ENCODE measurements at regions of chr21 and their contacts with region 1.

Region 1: GRCh38 chr21:44991538-44992483 is 52.0 kb downstream of the SLX9 start:
- DNase-seq: peak; percentile 79
- H3K4me3 ChIP-seq: 0 out of 2 replicates have a peak overlapping the region, but pooled peaks have one; percentile 17
- H3K27ac ChIP-seq: peak overlapping the region; percentile 21
- H3K27me3 ChIP-seq: peaks cover 48% of the 10 kb centered on the region
- CTCF ChIP-seq: peak; percentile 56

Region 2: DNA sequence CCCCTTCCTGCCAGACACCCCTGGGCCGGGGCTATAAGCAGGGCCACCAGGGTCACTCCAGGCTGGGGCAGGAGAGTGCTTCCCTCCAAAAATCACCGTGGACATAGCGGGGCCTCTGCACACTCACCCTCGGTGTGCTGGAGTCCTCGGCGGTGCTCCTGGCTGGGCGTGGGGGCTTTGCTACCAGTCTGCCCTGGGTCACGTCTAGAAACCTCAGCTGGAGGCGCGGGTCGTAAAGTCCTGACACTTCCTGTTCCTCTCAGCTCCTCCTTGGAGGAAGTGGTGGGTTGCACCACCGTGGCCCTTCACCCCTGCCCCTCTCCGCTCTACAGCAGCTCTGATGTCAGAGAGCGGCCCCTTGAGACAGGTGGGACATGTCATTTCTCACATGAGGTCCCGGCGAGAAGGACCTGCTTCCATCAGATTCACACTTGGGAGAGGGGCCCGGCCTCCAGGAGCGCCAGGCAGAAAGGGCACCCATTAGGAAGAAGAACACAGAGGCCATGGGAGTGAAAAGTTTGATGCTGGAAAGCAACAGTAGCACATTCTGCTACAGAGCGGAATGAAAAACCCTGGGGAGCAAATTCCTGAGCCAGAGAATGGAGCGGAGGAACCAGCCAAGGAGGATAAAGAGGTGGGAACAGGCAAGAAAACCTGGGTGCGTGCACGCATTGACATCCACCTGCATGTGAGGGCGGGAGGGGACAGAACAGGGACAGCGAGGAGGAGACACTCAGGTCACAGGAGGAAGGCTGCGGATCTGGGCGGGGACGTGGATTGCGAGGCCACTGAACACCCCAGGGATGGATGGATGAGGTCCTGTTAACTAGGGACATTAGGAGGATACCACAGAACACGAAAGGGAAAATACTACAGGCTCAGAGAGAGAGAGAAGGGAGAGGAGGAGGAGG is 70.9 kb before region 1 on chr21 and contains the start of gene ITGB2:
- CTCF ChIA-PET with region 1: no interaction called
- POLR2A ChIA-PET with region 1: no interaction called
- DNase-seq: no peak
- H3K4me3 ChIP-seq: no peak within 1 kb of the TSS
- H3K27ac ChIP-seq: no peak within 1 kb of the TSS
- H3K27me3 ChIP-seq: peaks cover 73% of the 10 kb centered on the region
- CTCF ChIP-seq: no peak
- polyA plus RNA-seq, gene ITGB2: 0.04 TPM in 1 of 2 replicates, not detected in the other

Region 3: GRCh38 chr21:44958471-44959191 is 33.2 kb before region 1 on chr21:
- CTCF ChIA-PET with region 1: no interaction called
- POLR2A ChIA-PET with region 1: interaction called, 21 read pairs
- DNase-seq: no peak
- H3K4me3 ChIP-seq: no peak overlapping the region
- H3K27ac ChIP-seq: no peak overlapping the region
- H3K27me3 ChIP-seq: no peaks in the 10 kb centered on the region
- CTCF ChIP-seq: no peak